Activated CD4-positive, alpha-beta T cell treated with anti-CD3 and anti-CD28 coated beads, Interleukin-2, amount 10 ng/mL, durations not matched to agents 24 days and 14 days (primary cell): ENCODE measurements at regions of chr11 and their contacts with region 1.

Region 1: DNA sequence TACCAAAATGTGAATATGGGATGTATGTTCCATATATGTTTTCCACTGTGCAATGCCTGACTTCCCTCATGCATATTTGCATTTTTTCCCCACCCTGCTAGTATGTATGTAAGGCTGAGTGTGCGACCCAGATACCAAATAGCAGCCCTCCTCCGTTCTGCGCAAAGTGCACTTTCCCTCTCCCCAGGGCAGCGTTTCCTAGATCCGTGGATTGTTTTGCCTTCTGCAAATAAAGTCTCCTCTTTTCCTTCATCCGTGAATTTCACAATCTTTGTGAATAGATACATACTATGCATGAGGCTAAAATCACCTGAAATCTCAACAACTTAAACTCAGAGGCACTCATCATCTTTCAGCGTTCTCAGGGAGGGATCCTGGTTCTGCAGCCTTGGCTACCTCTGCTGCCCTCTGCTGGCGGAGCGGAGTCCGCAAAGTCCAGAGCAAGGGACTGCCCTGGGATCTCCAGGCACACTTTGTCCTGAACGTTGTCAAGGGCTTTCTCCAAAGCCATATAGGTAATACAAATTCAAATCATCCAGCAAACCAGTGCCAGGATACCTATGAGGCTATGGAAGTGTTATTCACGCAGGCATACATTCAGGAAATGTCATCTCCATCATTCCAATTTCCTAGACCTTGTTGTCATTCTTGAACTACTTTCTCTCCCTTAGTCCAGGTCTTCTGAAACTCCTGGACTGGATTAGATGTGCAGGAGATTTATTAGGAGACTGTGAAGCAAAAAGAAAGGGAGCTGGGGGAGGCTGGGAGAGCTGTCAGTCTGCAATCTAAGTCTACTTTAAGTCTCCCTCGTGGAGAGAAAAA is 53.1 kb downstream of the CNTF start:
- DNase-seq: peak; percentile 91
- H3K4me3 Mint-ChIP-seq: no peak overlapping the region
- H3K27ac Mint-ChIP-seq: no peak overlapping the region
- H3K4me1 Mint-ChIP-seq: no peaks in the 10 kb centered on the region
- H3K27me3 Mint-ChIP-seq: peaks cover 7% of the 10 kb centered on the region

Region 2: DNA sequence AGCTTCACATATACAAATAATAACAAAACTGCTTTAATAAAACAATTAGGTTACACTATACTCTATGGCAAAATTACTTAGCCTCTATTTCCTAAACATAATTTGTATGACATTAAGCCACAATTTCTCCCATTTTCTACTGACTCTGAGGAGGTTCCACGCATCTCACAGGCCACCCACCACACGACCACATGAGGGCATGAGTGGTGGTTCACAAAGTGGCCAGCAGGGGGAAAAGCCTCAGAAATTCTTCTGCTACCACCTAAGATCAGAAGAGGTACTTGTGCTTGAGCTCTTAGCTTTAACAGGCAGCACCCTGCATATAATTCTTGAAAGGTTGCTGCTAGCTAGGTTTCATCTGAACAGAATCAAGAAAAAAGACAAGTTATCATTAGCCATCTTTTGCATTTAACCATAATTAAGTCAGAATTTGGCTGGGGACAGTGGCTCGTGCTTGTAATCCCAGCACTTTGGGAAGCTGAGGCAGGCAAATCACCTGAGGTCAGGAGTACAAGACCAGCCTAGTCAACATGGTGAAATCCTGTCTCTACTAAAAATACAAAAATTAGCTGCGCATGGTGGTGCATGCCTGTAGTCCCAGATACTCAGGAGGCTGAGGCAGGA is 107.5 kb before region 1 on chr11:
- intact Hi-C with region 1: loop called (anchors 2 kb)
- DNase-seq: peak; percentile 91
- H3K4me3 Mint-ChIP-seq: peak overlapping the region; percentile 11
- H3K27ac Mint-ChIP-seq: peak overlapping the region; percentile 80
- H3K4me1 Mint-ChIP-seq: peaks cover 47% of the 10 kb centered on the region
- H3K27me3 Mint-ChIP-seq: no peaks in the 10 kb centered on the region

Region 3: DNA sequence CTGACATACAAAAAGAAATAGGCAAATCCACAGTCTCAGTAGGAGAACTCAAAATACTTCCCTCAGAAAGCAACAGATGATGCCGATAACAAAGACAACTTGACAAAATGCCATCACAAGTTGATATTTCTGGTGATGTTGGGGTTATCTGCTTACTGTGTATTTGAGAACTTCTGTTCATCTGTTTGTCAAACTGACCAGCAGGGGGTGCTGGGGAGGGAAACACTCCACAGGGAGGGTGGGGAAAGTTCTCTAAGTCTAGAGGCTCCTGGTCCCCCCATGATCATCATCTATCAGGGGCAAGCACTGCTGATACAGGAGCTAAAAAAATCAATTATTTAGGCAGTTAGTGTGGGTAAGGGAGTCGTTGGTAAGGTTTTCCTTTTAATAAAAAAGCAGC is 283.0 kb after region 1 on chr11:
- intact Hi-C with region 1: no loop called
- DNase-seq: peak; percentile 73
- H3K4me3 Mint-ChIP-seq: no peak overlapping the region
- H3K27ac Mint-ChIP-seq: no peak overlapping the region
- H3K4me1 Mint-ChIP-seq: peaks cover 2% of the 10 kb centered on the region
- H3K27me3 Mint-ChIP-seq: peaks cover 3% of the 10 kb centered on the region